ENCODE measurements at regions of chr9 and their contacts with region 1.

Region 1: DNA sequence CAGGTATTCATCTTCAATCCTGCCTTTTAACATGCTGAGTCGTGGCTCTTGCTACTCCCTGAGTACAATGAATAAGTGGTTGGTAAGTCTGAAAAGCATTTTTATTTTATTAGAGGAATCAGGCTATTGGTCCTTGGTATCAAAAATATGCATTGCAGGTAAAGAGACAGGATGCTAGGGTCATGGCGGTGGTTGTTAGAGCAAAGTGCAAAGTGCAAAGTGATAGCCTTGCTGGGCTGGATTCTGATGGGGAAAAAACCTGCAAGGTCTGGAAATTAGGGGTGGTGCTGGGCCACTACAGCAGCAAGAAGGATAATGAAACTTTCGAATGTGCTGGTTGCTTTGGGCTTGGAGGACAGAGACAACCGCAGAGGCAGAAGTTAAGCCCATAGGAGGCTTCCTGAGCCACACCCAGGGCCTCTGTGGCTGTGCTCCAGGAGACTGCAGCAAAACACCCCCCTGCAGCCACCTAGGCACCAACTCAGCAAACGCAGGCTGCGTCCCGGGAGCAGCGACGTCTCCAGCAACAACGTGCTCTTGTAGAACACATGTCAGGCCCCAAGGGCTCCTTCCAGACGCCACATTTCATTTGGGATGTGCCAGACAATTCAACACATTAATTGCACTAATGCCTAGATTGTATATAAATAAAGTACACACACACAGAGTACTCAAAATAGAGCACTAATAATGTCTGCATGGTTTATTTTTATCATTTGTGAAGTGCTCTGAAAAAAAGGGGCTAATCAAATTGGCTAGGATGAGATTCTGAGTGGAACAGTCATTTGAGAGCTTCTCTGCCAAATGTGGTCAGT is 149.8 kb upstream of the RAPGEF1 start:
- DNase-seq: no peak
- ATAC-seq: peak in 2 of 4 donors; percentile 27 to 55
- H3K4me3 ChIP-seq: no peak overlapping the region
- H3K27ac ChIP-seq: no peak overlapping the region
- H3K4me1 ChIP-seq: no peaks in the 10 kb centered on the region
- H3K27me3 ChIP-seq: no peaks in the 10 kb centered on the region
- CTCF ChIP-seq: no peak

Region 2: DNA sequence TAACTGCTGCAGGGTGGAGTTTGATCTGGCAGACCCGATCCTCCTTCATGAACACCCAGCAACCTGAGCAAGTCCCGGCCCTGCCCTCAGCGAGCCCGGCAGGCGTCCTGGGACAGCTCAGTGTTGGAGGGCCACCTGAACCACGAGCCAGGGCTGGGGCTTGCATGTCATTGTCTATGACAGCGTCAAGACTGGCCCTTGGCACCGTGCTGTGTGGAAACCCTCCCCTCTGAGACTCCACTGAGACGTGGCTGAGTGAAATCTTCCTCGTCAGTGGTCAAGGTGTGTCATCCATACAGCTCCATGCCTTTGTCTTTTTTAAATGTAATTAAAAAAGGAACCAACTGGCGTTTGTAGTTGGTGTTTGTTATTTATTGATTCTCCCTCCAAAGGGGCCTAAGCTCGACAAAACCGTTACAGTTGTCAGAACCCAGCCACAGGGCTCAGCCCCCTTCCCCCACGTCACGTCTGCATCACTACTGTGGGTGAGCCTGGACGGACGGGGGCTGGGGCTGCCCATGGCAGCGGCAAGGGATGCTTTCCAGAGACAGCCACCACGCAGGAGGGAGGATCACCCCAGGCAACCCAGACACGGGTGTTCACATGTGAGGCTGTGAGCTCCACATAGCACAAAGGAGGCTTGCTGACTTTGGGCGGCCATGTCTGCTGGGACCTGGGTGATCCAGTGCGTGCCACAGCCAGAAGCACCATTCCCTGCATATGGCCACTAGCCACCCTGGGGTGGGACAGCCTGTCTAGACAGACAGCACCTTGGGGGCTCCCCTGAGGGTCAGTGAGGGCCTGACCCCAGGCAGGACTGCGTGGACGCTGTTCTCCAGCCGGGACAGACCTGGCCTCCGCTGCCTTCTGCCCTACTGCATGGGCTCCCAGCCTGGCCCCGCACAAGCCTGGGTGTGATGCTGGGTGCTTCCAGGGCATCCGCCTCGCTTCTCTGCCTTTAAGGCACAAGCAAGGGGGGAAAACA is 365.9 kb before region 1 on chr9:
- intact Hi-C with region 1: no loop called
- DNase-seq: no peak
- ATAC-seq: no peak
- H3K4me3 ChIP-seq: no peak overlapping the region
- H3K27ac ChIP-seq: no peak overlapping the region
- H3K4me1 ChIP-seq: peaks cover under 1% of the 10 kb centered on the region
- H3K27me3 ChIP-seq: no peaks in the 10 kb centered on the region
- CTCF ChIP-seq: no peak

Region 3: DNA sequence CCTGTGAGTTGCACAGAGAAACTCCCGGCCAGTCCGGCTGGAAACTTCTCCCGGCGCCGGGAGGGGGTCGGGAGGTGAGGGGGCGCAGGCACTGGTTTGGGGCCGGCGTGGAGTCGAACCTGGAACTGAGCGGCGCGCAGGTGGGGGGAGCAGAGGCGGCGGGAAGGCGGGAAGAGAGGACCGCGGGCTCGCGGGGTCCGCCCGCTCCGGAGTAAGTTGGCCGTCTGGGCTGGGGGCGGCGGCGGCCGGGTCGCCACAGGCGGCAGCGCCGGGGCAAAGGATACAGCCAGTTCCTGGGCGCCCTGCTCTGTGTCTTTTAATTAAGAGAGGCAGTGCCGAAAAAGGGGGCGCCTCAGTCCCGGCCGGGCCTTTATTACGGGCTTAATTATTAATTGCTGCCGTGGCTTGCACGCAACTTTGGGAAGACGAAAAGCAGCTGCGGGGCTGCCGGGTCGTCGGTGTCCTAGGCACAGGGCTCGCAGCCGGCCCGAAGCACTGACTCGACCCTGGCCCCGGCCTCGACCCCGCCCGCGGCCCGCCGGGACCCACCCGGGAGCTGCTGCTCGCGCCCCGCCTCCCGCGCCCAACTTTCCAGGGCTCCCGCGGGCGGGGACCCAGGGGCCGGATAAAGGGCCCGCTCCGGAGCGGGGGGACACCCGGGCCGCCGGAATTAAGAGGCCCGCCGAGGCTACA is 273.3 kb after region 1 on chr9:
- intact Hi-C with region 1: loop called in 1 of 2 experiments (anchors 1 kb)
- DNase-seq: peak in 1 of 2 donors; percentile 44
- ATAC-seq: no peak
- H3K4me3 ChIP-seq: peak overlapping the region; percentile 72
- H3K27ac ChIP-seq: no peak overlapping the region
- H3K4me1 ChIP-seq: peaks cover 15% of the 10 kb centered on the region
- H3K27me3 ChIP-seq: peaks cover 3 to 94% (median 44%) of the 10 kb centered on the region in 3 donors
- CTCF ChIP-seq: no peak

Region 4: GRCh38 chr9:132301521-132301920 is 411.9 kb after region 1 on chr9:
- intact Hi-C with region 1: no loop called
- DNase-seq: no peak
- ATAC-seq: no peak
- H3K4me3 ChIP-seq: no peak overlapping the region
- H3K27ac ChIP-seq: no peak overlapping the region
- H3K4me1 ChIP-seq: no peaks in the 10 kb centered on the region
- H3K27me3 ChIP-seq: no peaks in the 10 kb centered on the region
- CTCF ChIP-seq: no peak